Lower leg skin (tissue), 4 donors: ENCODE measurements at regions of chr10 and their contacts with region 1.

Region 1: DNA sequence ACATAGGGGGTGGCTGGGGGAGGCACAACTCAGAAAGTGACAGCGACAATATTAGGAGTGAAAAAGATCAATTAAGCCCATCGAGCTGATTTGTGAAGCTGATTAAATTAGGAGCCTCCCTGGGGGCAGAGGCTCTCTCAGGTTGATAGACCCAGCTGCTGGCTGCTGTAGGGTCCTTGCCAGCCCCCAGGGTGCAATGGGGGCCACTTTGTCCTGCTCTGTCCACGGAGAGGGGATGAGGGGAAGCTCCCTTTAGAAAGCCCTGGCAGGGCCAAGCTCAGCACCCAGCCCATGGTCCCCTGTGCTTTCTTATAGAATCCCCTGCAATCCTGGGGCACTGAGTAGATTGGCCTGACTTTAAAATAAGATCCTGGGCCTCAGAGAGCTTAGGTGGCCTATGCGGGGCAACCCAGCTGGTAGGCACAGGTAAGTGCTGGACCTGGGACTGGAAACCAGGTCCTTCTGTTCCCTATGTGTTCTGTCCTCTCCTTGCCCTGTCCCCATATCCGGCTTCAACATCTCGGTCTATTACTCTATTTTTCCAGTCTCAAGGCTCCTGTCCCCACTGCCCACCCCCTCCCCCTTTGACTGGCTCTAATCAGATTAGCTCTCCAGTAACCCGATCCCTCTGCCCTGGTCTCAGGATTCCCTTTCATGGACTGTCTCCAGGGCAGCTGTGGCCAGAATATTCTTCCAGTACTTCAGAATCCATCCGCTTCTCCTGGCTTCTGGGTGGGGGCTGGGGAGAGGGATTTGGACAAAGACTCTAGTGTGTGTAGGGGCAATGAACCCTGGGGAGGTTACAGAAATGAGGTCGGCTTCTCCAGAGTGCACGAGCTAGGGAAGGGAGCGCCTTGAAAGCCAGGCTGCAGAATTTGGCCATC is 259.6 kb downstream of the RPS24 start:
- DNase-seq: no peak
- H3K4me3 ChIP-seq: no peak overlapping the region
- CTCF ChIP-seq: no peak
- POLR2A ChIP-seq: no peak

Region 2: GRCh38 chr10:77494327-77494726 is 798.9 kb before region 1 on chr10:
- intact Hi-C with region 1: no loop called
- DNase-seq: no peak
- H3K4me3 ChIP-seq: no peak overlapping the region
- CTCF ChIP-seq: no peak
- POLR2A ChIP-seq: no peak

Region 3: DNA sequence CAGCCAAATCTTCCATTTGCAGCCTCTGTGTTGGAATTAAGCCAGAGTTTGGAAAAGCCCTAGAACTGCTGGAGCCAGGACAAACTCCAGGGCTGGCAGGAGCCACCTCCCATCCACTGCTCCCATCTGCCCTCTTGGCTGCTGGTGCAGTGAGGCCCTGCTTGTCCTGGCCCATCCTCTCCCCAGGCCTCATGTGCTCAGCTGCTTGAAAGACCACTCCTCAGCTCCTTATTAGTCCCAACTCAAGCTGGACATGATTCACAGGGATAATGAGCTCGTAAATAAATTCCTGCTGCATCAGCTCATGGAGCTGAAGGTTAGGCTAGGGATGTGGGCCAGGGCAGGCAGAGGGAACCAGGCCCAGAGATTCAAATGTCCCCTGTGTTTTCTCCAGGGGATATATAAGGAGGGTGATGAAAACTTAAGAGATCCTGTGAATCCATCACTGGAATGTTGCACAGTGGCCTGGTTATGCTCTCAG is 23.3 kb after region 1 on chr10:
- intact Hi-C with region 1: no loop called
- DNase-seq: peak in 1 of 2 donors; percentile 72
- H3K4me3 ChIP-seq: no peak overlapping the region
- CTCF ChIP-seq: no peak
- POLR2A ChIP-seq: no peak

Region 4: GRCh38 chr10:78464856-78465267 is 171.6 kb after region 1 on chr10:
- intact Hi-C with region 1: no loop called
- DNase-seq: peak in 1 of 2 donors; percentile 36
- H3K4me3 ChIP-seq: no peak overlapping the region
- CTCF ChIP-seq: no peak
- POLR2A ChIP-seq: no peak

Region 5: DNA sequence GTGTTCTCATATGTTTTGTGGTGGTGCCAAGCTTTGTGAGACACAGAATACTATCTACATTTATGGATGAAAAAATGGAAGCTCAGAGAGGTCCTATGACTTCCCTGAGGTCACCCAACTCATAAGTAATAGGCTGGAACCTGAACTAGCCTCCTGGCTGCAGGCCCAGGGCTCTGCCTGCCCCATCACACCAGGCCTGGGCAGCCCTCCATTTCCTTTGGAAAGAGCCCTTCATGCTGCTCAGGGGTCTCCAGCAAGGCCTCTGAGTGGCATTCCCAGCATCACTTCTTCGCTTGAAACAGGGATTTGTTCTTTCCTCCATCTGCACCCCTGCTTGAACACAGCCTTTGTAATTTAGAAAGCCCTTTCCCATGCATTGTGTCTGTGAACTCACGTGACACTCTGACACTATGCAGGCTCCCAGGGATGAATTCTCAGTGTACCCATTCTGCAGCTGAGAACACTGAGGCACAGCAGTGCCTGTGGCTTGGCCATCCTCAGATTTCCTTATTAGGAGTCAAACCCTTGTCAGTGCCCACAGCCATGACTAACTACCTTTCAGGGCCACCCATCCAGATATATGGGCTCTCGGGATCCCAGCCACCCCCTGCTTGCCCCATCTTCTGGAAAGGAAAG is 926.2 kb after region 1 on chr10:
- intact Hi-C with region 1: loop called (anchors 10 kb)
- DNase-seq: no peak
- H3K4me3 ChIP-seq: no peak overlapping the region
- CTCF ChIP-seq: no peak
- POLR2A ChIP-seq: no peak